ENCODE measurements at regions of chr1 and their contacts with region 1.

Region 1: DNA sequence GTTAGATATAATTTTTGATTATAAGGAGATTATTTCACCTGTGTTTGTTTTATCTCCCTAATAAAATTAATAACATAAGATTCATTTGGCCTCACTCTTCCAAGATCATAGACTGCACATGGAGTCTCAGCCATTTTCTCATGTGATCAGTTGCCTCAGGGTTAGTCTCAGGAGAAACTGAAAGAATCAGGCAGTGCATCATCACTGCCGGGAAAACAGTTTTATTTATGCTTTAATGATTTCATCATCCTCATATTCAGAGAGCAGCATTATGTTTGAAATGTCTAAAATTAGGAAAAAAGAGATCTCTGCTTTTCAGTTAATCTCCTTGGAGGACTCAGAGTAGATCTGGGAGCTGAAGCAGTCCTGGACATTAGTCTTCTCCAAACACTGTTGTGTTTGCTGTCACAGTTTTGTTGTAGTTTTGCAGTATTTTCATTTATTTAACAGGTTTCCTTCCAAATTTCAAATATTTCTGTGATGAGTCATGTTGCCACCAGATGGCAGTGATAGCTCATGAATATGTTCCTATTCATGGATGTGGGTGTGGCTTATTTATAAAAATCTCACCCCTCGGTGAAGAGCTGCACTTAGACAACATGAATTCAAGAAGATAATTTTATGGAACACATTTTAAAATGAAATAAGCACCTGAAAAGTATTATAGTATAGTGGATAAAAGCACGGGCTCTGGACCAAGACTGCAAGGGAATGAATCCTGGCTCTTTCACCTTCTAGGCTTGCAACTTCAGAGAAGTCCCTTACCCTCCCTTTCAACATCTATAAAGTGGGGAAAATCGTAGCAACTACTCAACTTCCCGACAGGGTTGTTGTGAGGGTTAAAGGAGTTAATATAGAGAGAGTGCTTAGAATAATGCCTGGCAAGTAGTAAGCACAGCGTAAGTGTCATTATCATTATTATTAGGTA is 31.2 kb downstream of the CHD1L start:
- DNase-seq: peak; percentile 42 to 76
- H3K4me3 ChIP-seq: no peak overlapping the region
- H3K4me1 ChIP-seq: peaks cover 3% of the 10 kb centered on the region
- H3K27me3 ChIP-seq: no peaks in the 10 kb centered on the region

Region 2: GRCh38 chr1:147545133-147545532 is 271.5 kb after region 1 on chr1:
- in situ Hi-C with region 1: no loop called
- DNase-seq: peak in 1 of 2 experiments; percentile 51
- H3K4me3 ChIP-seq: no peak overlapping the region
- H3K4me1 ChIP-seq: peaks cover 34% of the 10 kb centered on the region
- H3K27me3 ChIP-seq: no peaks in the 10 kb centered on the region

Region 3: DNA sequence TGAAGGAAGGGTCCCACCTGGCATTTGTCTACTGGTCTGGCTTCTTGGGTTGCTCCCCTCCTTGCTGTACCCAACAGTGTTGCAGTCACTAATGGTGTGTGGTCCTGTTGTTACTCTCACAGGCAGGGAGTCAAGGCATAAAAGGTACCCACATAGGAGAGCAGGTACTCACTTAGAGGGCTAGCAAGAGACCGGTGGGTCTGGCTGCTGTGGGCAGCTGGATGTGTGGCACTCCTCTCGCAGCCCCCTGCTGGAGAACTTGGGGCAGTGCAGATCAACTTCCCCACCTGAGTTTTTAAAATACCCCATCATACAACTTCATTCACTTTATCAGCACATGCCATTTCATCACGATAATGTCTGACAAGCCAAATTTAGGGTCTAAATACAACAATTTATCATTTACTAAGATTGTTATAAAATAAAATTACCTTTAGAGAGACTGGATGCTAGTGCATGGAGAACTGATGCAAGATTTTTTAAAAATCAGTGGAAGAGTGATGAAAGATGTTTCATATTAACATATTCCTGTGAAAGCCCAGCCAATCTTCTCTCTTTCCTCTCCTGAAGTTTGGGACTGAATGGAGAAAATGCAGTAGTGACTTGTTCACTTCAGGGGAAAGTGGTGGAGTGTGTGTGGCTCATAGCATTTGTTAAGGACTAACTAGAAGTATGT is 353.9 kb after region 1 on chr1:
- in situ Hi-C with region 1: loop called (anchors 10 kb)
- DNase-seq: peak; percentile 22 to 68
- H3K4me3 ChIP-seq: no peak overlapping the region
- H3K4me1 ChIP-seq: no peaks in the 10 kb centered on the region
- H3K27me3 ChIP-seq: no peaks in the 10 kb centered on the region